Left colon (tissue), 2 donors: ENCODE measurements at regions of chr18 and their contacts with region 1.

Region 1: GRCh38 chr18:70195852-70196434 is 9.5 kb downstream of the RTTN start:
- DNase-seq: no peak
- ATAC-seq: peak; percentile 76

Region 2: DNA sequence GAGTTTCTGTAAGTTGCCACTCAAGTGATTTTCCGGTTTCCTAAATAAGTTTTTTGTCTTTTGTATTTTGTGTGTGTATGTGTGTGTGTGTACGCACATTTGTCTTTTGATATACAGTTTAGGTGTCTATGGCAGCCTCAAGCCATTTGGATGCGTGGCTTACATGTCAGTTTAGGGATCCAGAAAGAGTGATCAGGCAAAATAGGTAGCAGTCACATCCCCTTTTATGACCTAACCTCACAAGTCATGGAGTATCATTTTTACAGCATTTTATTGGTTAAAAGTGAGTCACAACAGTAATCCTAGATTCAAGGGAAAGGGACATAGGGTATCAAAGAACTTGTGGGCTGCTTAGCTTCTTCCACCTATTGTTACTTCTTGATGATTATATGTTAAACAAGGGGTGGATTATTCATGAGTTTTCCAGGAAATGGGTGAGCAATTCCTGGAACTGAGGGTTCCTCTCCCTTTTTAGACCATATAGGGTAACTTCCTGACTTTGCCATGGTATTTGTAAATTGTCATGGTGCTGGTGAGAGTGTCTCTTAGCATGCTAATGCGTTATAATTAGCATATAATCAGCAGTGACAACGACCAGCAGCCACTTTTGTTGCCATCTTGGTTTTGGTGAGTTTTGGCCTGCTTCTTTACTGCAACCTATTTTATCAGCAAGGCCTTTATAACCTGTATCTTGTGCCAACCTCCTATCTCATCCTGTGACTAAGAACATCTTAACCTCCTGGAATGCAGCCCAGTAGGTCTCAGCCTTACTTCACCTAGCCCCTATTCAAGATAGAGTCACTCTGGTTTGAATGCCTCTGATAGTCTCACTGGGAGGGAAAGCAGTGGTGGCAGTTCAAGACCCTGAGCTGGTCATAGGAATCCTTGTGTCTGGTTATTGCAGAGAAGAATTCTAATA is 84.3 kb after region 1 on chr18:
- intact Hi-C with region 1: no loop called
- DNase-seq: no peak
- ATAC-seq: peak; percentile 54

Region 3: DNA sequence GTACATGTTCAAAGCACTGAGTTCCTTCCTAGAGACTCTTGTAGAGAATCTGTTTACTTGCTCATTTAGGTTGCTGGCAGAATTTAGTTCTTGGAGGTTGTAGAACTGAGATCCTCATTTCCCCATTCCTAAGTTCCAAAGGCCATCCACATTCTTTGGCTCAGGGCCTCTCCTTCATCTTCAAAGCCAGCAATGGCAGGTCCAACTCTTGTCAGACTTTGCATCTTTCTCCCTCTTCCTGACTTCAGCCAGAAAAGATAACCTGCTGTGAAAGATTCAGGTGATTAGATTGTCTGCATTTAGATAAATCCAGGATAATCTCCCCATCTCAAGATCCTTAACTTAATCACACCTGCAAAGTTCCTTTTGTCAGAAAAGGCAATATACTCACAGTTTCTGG is 144.0 kb after region 1 on chr18:
- intact Hi-C with region 1: no loop called
- DNase-seq: no peak
- ATAC-seq: no peak

Region 4: DNA sequence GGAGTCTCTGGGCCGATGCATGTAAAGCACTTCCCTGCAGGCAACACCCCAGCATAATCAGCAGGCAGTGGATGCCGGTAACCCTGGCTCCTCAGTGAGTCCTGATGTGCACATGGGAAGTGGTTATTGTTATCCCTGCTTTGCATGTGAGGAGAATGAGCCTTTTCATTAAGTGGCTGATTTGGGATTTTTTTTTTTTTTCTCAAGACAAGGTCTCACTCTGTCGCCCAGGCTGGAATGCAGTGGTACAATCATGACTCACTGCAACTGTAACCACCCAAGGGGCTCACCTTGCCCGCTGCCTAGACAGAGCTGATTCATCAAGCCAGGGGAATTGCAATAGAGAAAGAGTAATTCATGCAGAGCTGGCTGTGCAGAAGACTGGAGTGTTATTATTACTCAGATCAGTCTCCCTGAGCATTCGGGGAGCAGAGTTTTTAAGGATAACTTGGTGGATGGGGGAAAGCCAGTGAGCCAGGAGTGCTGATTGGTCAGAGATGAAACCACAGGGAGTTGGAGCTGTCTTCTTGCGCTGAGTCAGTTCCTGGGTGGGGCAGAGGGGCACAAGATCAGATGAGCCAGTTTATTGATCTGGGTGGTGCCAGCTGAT is 188.3 kb after region 1 on chr18:
- intact Hi-C with region 1: no loop called
- DNase-seq: no peak
- ATAC-seq: no peak

Region 5: DNA sequence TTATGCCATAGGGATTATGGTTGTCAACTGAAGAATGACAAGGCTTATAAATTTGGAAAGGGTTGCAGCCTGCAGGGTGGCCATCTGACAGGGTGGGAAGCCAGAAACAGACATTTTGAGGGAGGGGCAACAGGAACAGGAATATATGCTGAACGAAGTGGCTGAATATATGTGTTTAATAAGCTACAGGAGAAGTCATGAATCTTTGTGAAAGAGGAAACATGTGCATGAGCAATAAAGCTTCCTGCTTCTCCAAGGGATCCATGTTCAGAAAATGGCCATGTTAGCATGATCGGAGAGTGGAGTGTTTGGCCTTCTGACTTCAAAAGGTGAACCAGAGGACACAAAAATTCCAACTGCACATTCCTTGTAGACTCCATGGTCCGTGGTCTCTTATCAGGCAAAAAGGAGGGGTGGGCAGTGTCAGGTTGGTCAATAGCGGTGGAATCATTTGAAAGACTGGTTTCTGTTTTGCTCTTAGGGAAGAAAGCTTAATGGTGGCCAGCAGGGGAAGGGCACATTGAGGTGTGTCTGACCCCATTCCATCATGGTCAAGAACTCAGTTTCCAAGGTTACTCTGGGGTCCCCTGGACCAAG is 237.0 kb after region 1 on chr18:
- intact Hi-C with region 1: loop called in 1 of 2 experiments (anchors 2 kb)
- DNase-seq: no peak
- ATAC-seq: no peak

Region 6: DNA sequence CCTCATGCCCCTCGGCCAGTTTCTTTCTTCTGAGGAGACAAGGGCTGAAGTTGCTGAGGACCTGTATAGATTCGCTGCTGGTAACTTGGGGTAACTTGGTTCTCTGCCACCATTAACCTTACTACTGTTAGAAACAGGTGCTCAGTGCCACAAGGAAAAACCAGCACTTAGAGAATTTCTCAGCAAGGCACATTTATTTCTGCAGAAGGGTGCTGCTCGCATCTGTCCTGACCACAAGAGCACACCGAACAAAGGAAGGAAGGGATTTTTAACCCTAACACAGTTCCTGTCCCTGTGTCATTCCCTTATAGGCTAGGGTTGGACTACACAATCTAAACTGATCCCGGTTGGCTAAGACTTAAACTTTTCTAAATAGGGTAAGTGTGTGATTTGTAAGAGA is 247.0 kb after region 1 on chr18:
- intact Hi-C with region 1: loop called in 1 of 2 experiments (anchors 10 kb)
- DNase-seq: no peak
- ATAC-seq: no peak

Region 7: GRCh38 chr18:70454704-70455322 is 258.9 kb after region 1 on chr18:
- intact Hi-C with region 1: loop called in 1 of 2 experiments (anchors 5 kb)
- DNase-seq: no peak
- ATAC-seq: peak; percentile 69